ENCODE measurements at regions of chr2 and their contacts with region 1.

Region 1: DNA sequence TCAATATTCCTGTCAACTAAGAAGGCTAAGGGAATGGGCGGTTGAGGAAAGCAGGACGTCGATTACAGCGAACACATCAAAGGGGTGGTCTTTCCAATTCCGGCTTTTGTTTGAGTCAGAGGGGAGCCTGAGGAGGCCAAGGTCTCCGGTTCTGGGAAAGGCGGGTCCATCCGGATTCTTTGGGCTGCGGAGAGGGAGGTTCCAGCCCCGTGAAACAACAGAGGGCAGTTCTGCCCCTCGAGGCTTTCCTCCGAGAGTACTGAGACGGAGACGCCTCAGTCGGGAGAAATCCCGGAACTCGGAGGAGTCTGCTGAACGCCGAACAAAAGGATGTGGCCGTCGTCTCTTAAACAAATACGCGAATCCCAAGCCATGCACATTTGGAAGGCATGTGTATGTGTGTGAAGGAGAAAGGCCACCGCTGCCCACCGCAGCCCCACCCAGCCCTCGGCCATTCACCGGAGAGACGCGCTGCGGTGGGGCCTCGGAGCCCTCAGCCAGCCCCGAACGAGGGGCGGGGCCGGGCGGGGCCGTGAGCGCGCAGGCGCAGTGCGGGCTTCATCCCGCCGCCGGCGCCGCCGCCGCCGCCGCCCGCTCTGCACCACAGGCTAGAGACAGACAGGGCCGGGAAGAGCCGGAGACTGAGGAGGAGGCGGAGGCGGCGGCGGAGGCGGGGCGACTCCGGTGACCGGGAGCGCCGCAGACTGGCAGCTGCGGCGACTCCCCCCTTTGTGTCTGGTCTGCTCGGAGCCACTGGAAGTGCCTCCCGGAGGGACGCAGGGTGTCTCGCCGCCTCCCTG is at the start of gene BMPR2:
- DNase-seq: peak; percentile 90
- ATAC-seq: peak; percentile 86
- H3K4me3 Mint-ChIP-seq: peak within 1 kb of the TSS; percentile 95
- H3K27ac Mint-ChIP-seq: peak within 1 kb of the TSS; percentile 94
- H3K4me1 Mint-ChIP-seq: peaks cover 23% of the 10 kb centered on the region
- H3K27me3 Mint-ChIP-seq: no peaks in the 10 kb centered on the region
- total RNA-seq, gene BMPR2: 7.6 to 10.8 TPM

Region 2: GRCh38 chr2:201642579-201643215 is 733.1 kb before region 1 on chr2:
- CTCF ChIA-PET with region 1: no interaction called
- POLR2A ChIA-PET with region 1: no interaction called
- intact Hi-C with region 1: loop called in 1 of 2 experiments (anchors 2 kb)
- DNase-seq: peak; percentile 91
- ATAC-seq: peak; percentile 82
- H3K4me3 Mint-ChIP-seq: peak overlapping the region; percentile 79
- H3K27ac Mint-ChIP-seq: peak overlapping the region; percentile 84
- H3K4me1 Mint-ChIP-seq: peaks cover 9% of the 10 kb centered on the region
- H3K27me3 Mint-ChIP-seq: no peaks in the 10 kb centered on the region

Region 3: DNA sequence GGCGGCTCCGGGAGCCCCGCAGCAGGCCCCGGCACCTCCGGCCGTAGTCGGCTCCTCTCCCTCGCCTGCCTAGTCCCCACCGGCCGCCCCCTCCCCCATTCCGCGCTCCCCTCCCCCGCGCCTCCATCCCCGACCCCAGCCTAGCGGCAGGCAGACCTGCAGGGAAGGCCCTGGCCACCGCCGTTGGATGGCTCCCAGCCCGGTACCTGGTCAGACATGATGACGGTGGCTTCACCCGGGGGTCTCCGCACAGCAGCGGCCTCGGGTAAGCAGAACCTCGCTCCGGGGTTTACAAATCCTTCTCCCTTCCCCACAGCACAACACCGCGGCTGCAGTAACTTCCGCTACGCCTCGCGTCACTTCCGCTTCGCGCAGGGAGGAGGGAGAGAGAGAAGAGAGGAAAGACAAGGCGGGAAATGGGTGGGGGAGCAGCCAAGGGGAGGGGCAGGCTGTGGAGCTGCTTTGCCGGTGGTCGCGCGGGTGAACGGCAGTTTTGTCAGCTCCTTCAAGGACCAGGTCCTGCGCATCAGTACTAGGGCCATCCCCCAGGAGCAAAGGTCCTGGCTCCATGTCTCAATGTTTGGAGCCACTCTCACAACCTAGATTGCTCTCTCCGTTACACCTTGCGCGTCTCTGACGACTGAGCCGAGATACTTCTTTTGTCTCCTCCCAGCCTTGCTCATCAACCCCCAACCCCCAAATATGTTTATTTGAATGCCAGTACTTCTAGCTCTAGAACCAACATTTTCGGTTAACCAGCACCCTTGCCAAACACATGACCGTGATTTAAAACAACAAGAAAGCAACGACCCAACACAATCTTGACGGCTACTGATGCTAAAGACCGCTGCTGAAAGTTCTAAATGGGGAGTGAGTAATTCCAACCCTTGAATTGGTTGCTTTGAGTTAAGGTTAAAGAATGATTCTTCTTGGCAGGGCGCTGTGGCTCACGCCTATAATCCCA is 137.3 kb before region 1 on chr2 and contains the start of gene SUMO1:
- CTCF ChIA-PET with region 1: no interaction called
- POLR2A ChIA-PET with region 1: no interaction called
- intact Hi-C with region 1: loop called in 1 of 2 experiments (anchors 1 kb)
- DNase-seq: peak; percentile 95
- ATAC-seq: peak; percentile 93
- H3K4me3 Mint-ChIP-seq: peak within 1 kb of the TSS; percentile 98
- H3K27ac Mint-ChIP-seq: peak within 1 kb of the TSS; percentile 97
- H3K4me1 Mint-ChIP-seq: peaks cover 28% of the 10 kb centered on the region
- H3K27me3 Mint-ChIP-seq: no peaks in the 10 kb centered on the region
- total RNA-seq, gene SUMO1: 132 to 164 TPM

Region 4: GRCh38 chr2:202564226-202564625 is 188.4 kb after region 1 on chr2:
- CTCF ChIA-PET with region 1: no interaction called
- POLR2A ChIA-PET with region 1: interaction called, 10 read pairs
- intact Hi-C with region 1: no loop called
- DNase-seq: no peak
- ATAC-seq: no peak
- H3K4me3 Mint-ChIP-seq: no peak overlapping the region
- H3K27ac Mint-ChIP-seq: no peak overlapping the region
- H3K4me1 Mint-ChIP-seq: no peaks in the 10 kb centered on the region
- H3K27me3 Mint-ChIP-seq: no peaks in the 10 kb centered on the region

Region 5: GRCh38 chr2:203014456-203015199 is 638.8 kb after region 1 on chr2 and contains the start of gene NBEAL1:
- CTCF ChIA-PET with region 1: no interaction called
- POLR2A ChIA-PET with region 1: no interaction called
- intact Hi-C with region 1: loop called in 1 of 2 experiments (anchors 2 kb)
- DNase-seq: peak; percentile 98
- ATAC-seq: peak; percentile 96
- H3K4me3 Mint-ChIP-seq: peak within 1 kb of the TSS; percentile 93
- H3K27ac Mint-ChIP-seq: peak within 1 kb of the TSS; percentile 89
- H3K4me1 Mint-ChIP-seq: peaks cover 32% of the 10 kb centered on the region
- H3K27me3 Mint-ChIP-seq: no peaks in the 10 kb centered on the region
- total RNA-seq, gene NBEAL1: 8.2 to 13.0 TPM

Region 6: DNA sequence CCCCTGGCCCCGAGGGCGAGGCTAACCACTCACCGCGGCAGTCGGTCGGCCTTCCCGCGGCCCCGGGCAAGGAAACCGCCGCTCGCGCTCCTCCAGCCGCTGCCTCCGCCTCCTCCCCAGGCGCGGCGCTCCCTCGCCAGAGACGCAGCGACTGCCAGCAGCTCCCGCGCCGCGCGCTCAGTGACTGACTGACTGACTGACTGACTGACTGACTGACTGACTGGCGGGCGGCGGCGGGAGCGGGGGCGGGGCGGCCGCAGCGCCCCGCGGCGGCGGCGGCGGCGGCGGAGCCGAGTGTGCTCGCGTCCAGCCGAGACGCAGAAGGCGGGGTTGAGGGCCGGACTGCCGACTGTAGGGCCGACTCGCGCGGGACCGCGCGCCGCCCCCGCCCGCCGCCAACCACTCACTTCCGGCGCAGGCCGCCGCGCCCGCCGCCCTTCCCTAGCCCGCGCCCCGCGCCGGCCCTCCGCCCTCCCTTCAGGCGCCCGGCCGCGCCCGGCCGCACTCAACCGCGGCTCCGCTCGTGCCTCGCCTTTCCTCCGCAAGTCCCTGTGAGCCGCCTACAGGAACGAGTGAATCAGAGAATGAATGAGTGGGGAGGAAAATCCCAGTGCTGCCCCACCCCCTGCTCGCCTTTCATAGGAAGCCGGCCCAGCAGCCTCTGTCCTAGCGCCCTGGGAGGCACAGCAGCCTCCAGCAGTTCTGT is 1159.4 kb after region 1 on chr2 and contains the start of gene RAPH1:
- CTCF ChIA-PET with region 1: no interaction called
- POLR2A ChIA-PET with region 1: no interaction called
- intact Hi-C with region 1: loop called in 1 of 2 experiments (anchors 2 kb)
- DNase-seq: peak; percentile 85
- ATAC-seq: peak; percentile 77
- H3K4me3 Mint-ChIP-seq: peak within 1 kb of the TSS; percentile 74
- H3K27ac Mint-ChIP-seq: peak within 1 kb of the TSS; percentile 56
- H3K4me1 Mint-ChIP-seq: peaks cover 30% of the 10 kb centered on the region
- H3K27me3 Mint-ChIP-seq: peaks cover 9% of the 10 kb centered on the region
- total RNA-seq, gene RAPH1: 8.5 to 9.9 TPM

Measured in activated CD4-positive, alpha-beta T cell treated with anti-CD3 and anti-CD28 coated beads for 36 hours (primary cell).